ENCODE measurements at regions of chr17 and their contacts with region 1.

Region 1: DNA sequence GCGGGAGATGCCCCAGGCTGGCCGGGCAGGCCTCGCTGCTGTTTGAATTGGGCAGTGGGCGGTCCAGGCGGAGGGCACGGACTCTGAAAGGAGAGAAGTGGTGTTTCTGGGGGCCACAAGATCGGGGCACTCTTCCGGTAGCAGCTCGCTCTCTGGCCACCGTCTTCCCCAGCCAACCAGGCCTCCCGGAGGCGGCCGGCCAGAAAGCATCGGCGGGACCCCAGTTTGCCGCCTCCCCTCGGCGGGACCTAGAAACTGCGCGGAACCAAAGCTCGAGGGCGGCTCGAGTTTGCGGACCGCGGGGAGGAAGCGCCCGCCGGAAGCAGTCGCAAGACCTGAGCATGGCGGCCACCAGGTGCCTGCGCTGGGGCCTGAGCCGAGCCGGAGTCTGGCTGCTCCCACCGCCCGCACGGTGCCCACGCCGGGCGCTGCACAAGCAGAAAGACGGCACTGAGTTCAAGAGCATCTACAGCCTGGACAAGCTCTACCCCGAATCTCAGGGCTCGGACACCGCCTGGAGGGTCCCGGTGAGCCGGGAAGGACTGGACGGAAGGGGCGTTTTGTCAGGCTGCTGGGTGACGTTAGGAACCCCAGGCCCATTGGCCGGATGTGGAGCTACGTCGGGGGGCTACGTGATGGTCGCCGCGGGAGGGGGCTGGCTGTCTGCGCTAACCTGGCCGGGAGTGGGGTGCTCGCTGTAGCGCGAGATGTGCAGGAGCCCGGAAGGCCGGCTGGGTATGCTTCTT is at the start of gene MRPL58:
- DNase-seq: peak; percentile 75 to 79 (median 76)
- H3K4me3 ChIP-seq: peak within 1 kb of the TSS; percentile 85 to 90
- H3K4me3 Mint-ChIP-seq: peak within 1 kb of the TSS; percentile 93 to 98 (median 96)
- H3K27ac ChIP-seq: peak within 1 kb of the TSS; percentile 71
- H3K27ac Mint-ChIP-seq: peak within 1 kb of the TSS; percentile 80 to 94 (median 92)
- H3K4me1 ChIP-seq: peaks cover 19% of the 10 kb centered on the region
- H3K4me1 Mint-ChIP-seq: peaks cover 20 to 44% (median 32%) of the 10 kb centered on the region in 4 donors
- H3K27me3 ChIP-seq: no peaks in the 10 kb centered on the region
- H3K27me3 Mint-ChIP-seq: no peaks in the 10 kb centered on the region
- total RNA-seq, gene MRPL58: 22.6 to 26.7 TPM

Region 2: GRCh38 chr17:74972107-74972972 is 40.2 kb before region 1 on chr17 and contains the start of gene HID1:
- CTCF ChIA-PET with region 1: interaction called, 3 read pairs
- POLR2A ChIA-PET with region 1: interaction called, 25 read pairs
- intact Hi-C with region 1: no loop called
- DNase-seq: peak; percentile 71 to 75 (median 74)
- H3K4me3 ChIP-seq: peak within 1 kb of the TSS; percentile 36 to 62
- H3K4me3 Mint-ChIP-seq: peak within 1 kb of the TSS; percentile 81 to 92 (median 86)
- H3K27ac ChIP-seq: peak within 1 kb of the TSS; percentile 32
- H3K27ac Mint-ChIP-seq: peak within 1 kb of the TSS; percentile 57 to 90 (median 74)
- H3K4me1 ChIP-seq: peaks cover 15% of the 10 kb centered on the region
- H3K4me1 Mint-ChIP-seq: peaks cover 4 to 11% (median 7%) of the 10 kb centered on the region in 4 donors
- H3K27me3 ChIP-seq: no peaks in the 10 kb centered on the region
- H3K27me3 Mint-ChIP-seq: peaks cover 3 to 5% of the 10 kb centered on the region in 2 donors
- total RNA-seq, gene HID1: 17.5 to 19.5 TPM

Region 3: GRCh38 chr17:74987418-74987908 is 25.1 kb before region 1 on chr17 and contains the start of gene CDR2L:
- CTCF ChIA-PET with region 1: interaction called, 22 read pairs
- POLR2A ChIA-PET with region 1: interaction called, 20 read pairs
- intact Hi-C with region 1: loop called (anchors 1 kb)
- DNase-seq: peak; percentile 89 to 91 (median 90)
- H3K4me3 ChIP-seq: peak within 1 kb of the TSS in 1 of 2 donors; percentile 61
- H3K4me3 Mint-ChIP-seq: peak within 1 kb of the TSS; percentile 84 to 94 (median 90)
- H3K27ac ChIP-seq: no peak within 1 kb of the TSS
- H3K27ac Mint-ChIP-seq: peak within 1 kb of the TSS; percentile 3 to 84 (median 72)
- H3K4me1 ChIP-seq: peaks cover 17% of the 10 kb centered on the region
- H3K4me1 Mint-ChIP-seq: peaks cover 6 to 22% (median 12%) of the 10 kb centered on the region in 4 donors
- H3K27me3 ChIP-seq: no peaks in the 10 kb centered on the region
- H3K27me3 Mint-ChIP-seq: peaks cover 2% of the 10 kb centered on the region in 2 donors
- total RNA-seq, gene CDR2L: 0.08 to 0.20 TPM

Region 4: DNA sequence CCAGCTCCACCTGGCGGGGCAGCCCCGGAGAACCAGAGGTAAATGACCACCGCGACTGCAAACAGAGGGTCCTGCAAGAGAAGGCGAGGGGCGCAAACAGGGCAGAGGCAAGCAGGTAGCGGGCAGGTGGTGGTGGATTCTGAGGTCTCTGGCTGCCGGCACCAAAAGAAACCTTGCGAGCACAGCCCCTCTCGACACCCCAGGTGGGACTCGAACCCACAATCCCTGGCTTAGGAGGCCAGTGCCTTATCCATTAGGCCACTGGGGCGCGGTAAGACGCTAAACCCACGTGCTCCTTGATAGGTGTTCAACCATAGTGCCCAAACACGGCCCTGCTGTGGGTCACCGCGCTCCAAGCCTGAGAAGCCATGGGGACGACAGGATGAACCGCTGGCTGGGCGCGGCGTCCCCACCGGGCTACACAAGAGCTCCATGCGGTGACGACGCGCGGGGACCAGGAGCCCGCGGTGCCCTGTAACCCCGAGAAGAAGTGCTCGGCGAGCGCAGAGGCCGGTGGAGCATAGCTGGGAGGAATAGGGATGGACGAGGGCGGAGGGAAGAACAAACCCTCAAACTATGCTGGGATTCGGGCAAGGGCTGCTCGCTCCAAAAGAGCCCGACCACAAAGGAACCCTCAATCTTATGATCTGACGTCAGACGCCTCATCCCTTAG is 21.9 kb after region 1 on chr17:
- CTCF ChIA-PET with region 1: interaction called, 23 read pairs
- POLR2A ChIA-PET with region 1: interaction called, 91 read pairs
- intact Hi-C with region 1: loop called (anchors 1 kb)
- DNase-seq: peak; percentile 73 to 83 (median 75)
- H3K4me3 ChIP-seq: peak overlapping the region; percentile 64 to 70
- H3K4me3 Mint-ChIP-seq: peak overlapping the region; percentile 79 to 91 (median 88)
- H3K27ac ChIP-seq: peak overlapping the region; percentile 55
- H3K27ac Mint-ChIP-seq: peak overlapping the region; percentile 99 to 100 (median 100)
- H3K4me1 ChIP-seq: peaks cover 57% of the 10 kb centered on the region
- H3K4me1 Mint-ChIP-seq: peaks cover 31 to 69% (median 54%) of the 10 kb centered on the region in 4 donors
- H3K27me3 ChIP-seq: no peaks in the 10 kb centered on the region
- H3K27me3 Mint-ChIP-seq: peaks cover 0 to 14% of the 10 kb centered on the region in 2 donors

Region 5: DNA sequence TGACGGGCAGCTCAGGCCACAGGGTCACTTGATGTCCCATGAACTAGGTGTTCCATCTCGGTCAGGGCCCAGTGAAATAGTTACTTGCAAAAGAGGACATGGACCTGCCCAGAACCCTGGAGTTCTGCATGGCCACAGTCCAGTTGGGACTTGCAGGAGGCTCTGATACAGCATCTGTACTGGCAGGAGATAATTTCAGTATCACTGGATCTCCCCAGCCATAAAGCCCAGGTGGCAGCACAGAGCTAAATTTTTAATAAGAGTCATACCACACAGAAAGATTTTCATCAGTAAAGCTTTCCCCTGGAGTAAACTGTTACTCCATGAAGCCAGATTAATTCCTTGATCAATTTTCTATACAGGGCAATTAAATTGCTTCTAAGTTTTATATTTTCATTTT is 57.3 kb after region 1 on chr17:
- CTCF ChIA-PET with region 1: interaction called, 7 read pairs
- POLR2A ChIA-PET with region 1: interaction called, 10 read pairs
- intact Hi-C with region 1: no loop called
- DNase-seq: no peak
- H3K4me3 ChIP-seq: no peak overlapping the region
- H3K4me3 Mint-ChIP-seq: no peak overlapping the region
- H3K27ac ChIP-seq: no peak overlapping the region
- H3K27ac Mint-ChIP-seq: peak overlapping the region in 4 of 7 donors; percentile 25 to 62 (median 38)
- H3K4me1 ChIP-seq: peaks cover 21% of the 10 kb centered on the region
- H3K4me1 Mint-ChIP-seq: peaks cover 13 to 34% (median 23%) of the 10 kb centered on the region in 4 donors
- H3K27me3 ChIP-seq: no peaks in the 10 kb centered on the region
- H3K27me3 Mint-ChIP-seq: no peaks in the 10 kb centered on the region

Region 6: GRCh38 chr17:75131280-75132017 is 118.9 kb after region 1 on chr17 and contains the start of gene NT5C:
- CTCF ChIA-PET with region 1: interaction called, 8 read pairs
- POLR2A ChIA-PET with region 1: interaction called, 10 read pairs
- intact Hi-C with region 1: no loop called
- DNase-seq: peak in 4 of 5 donors; percentile 38 to 60 (median 49)
- H3K4me3 ChIP-seq: peak within 1 kb of the TSS; percentile 61 to 74
- H3K4me3 Mint-ChIP-seq: peak within 1 kb of the TSS; percentile 87 to 91 (median 90)
- H3K27ac ChIP-seq: peak within 1 kb of the TSS; percentile 80
- H3K27ac Mint-ChIP-seq: peak within 1 kb of the TSS; percentile 81 to 92 (median 88)
- H3K4me1 ChIP-seq: peaks cover 16% of the 10 kb centered on the region
- H3K4me1 Mint-ChIP-seq: peaks cover 8 to 19% (median 11%) of the 10 kb centered on the region in 4 donors
- H3K27me3 ChIP-seq: no peaks in the 10 kb centered on the region
- H3K27me3 Mint-ChIP-seq: no peaks in the 10 kb centered on the region
- total RNA-seq, gene NT5C: 40.1 to 46.6 TPM

Region 7: DNA sequence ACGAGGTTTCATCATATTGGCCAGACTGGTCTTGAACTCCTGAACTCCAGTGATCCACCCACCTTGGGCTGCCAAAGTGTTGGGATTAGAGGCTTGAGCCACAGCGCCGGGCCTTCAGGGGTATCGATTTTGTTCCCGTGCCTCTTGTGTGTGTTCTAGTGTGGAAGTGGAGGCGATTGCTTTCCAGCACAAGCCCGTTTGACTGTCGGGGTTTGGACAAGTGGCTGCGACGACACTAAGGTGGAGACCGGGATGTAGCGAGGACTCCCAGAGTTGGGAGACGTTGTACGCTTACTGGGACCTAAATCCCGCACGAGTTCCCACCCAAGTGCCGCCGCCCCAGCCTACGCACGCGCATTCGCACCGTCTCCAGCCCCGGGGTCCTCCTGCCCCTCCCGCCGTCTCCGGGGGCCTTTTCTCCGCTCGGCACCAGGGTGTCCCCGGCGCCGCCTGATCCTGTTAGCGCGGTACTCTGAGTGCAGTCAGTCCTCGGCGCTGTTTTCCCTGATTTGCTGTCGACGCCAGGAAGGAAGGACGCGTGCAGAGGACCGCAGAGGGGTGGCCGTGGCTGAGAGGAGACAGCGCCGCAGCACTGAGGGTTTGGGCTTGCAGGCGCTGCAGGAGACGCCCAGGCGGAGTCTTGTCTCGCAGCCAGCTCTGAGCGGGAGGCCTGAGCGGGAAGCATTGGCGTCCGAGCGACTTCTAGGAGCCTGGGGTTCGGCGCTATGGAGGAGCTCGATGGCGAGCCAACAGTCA is 192.7 kb after region 1 on chr17 and contains the start of gene NUP85:
- CTCF ChIA-PET with region 1: interaction called, 10 read pairs
- POLR2A ChIA-PET with region 1: interaction called, 3 read pairs
- intact Hi-C with region 1: no loop called
- DNase-seq: peak; percentile 88 to 95 (median 93)
- H3K4me3 ChIP-seq: peak within 1 kb of the TSS; percentile 55 to 86
- H3K4me3 Mint-ChIP-seq: peak within 1 kb of the TSS; percentile 93 to 99 (median 96)
- H3K27ac ChIP-seq: peak within 1 kb of the TSS; percentile 80
- H3K27ac Mint-ChIP-seq: peak within 1 kb of the TSS; percentile 99 to 100 (median 99)
- H3K4me1 ChIP-seq: peaks cover 26% of the 10 kb centered on the region
- H3K4me1 Mint-ChIP-seq: peaks cover 15 to 48% (median 24%) of the 10 kb centered on the region in 4 donors
- H3K27me3 ChIP-seq: no peaks in the 10 kb centered on the region
- H3K27me3 Mint-ChIP-seq: no peaks in the 10 kb centered on the region
- total RNA-seq, gene NUP85: 137 to 164 TPM

Region 8: GRCh38 chr17:75309025-75309772 is 296.7 kb after region 1 on chr17:
- CTCF ChIA-PET with region 1: no interaction called
- POLR2A ChIA-PET with region 1: no interaction called
- intact Hi-C with region 1: no loop called
- DNase-seq: no peak
- H3K4me3 ChIP-seq: no peak overlapping the region
- H3K4me3 Mint-ChIP-seq: no peak overlapping the region
- H3K27ac ChIP-seq: no peak overlapping the region
- H3K27ac Mint-ChIP-seq: peak overlapping the region in 1 of 7 donors; percentile 22
- H3K4me1 ChIP-seq: no peaks in the 10 kb centered on the region
- H3K4me1 Mint-ChIP-seq: peaks cover 0 to 2% (median 0%) of the 10 kb centered on the region in 4 donors
- H3K27me3 ChIP-seq: no peaks in the 10 kb centered on the region
- H3K27me3 Mint-ChIP-seq: no peaks in the 10 kb centered on the region